HCT116 (cell line): ENCODE measurements at regions of chr12 and their contacts with region 1.

Region 1: GRCh38 chr12:25284024-25284423 is 33.3 kb upstream of the KRAS start:
- DNase-seq: no peak
- ATAC-seq: no peak
- H3K4me3 ChIP-seq: no peak overlapping the region
- H3K27ac ChIP-seq: no peak overlapping the region
- H3K4me1 ChIP-seq: 0 out of 4 replicates have a peak, but pooled peaks cover 0 to 3% of the 10 kb centered on the region in 2 experiments
- H3K27me3 ChIP-seq: no peaks in the 10 kb centered on the region
- CTCF ChIP-seq: no peak
- POLR2A ChIP-seq: no peak
- RAD21 ChIP-seq: no peak

Region 2: DNA sequence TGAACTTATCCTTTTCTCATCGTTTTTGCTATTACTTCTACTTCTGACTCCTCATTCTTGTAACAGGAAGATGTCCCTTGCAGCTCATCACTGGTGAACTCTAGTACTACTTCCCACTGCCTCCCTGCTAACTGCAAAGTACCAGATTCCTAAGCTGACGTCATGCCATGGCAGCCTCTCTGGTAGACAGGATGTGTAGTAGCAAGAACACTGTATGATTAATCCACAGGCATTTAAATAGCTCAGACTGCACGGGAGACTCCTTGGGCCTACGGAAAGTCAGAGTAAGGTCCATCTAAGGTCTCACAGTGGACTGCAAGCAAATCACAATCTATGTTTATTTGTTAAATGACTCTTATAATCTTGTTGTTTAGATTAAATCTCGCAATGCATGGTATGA is 132.5 kb before region 1 on chr12:
- CTCF ChIA-PET with region 1: no interaction called
- POLR2A ChIA-PET with region 1: no interaction called
- RAD21 ChIA-PET with region 1: no interaction called
- intact Hi-C with region 1: no loop called
- DNase-seq: no peak
- ATAC-seq: 0 out of 2 replicates have a peak, but pooled peaks have one; percentile 36
- H3K4me3 ChIP-seq: no peak overlapping the region
- H3K27ac ChIP-seq: no peak overlapping the region
- H3K4me1 ChIP-seq: no peaks in the 10 kb centered on the region
- H3K27me3 ChIP-seq: no peaks in the 10 kb centered on the region
- CTCF ChIP-seq: no peak
- POLR2A ChIP-seq: no peak
- RAD21 ChIP-seq: no peak

Region 3: DNA sequence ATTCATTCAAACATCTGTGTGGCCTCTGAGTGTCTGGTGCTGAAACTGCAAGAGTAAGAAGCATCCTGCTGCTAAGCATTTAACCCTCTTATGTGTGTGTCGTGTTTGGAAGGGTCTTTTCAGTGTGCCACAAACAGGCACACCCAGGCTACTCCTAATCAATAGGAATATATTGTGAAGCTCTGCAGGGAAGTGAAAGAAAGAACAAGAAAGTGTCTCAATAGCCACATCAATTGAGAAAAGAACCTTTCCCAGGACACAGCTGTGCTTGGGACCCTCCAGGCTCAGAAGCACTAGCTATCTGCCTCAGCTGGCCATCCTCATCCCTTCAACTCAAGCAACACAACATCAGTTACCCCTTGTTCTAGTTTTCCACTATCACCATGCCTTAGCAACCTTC is 19.9 kb before region 1 on chr12:
- CTCF ChIA-PET with region 1: no interaction called
- POLR2A ChIA-PET with region 1: no interaction called
- RAD21 ChIA-PET with region 1: no interaction called
- intact Hi-C with region 1: loop called (anchors 2 kb)
- DNase-seq: no peak
- ATAC-seq: no peak
- H3K4me3 ChIP-seq: no peak overlapping the region
- H3K27ac ChIP-seq: no peak overlapping the region
- H3K4me1 ChIP-seq: no peaks in the 10 kb centered on the region
- H3K27me3 ChIP-seq: no peaks in the 10 kb centered on the region
- CTCF ChIP-seq: no peak
- POLR2A ChIP-seq: no peak
- RAD21 ChIP-seq: no peak